Heart right ventricle (tissue), 16 donors: ENCODE measurements at regions of chr2 and their contacts with region 1.

Region 1: DNA sequence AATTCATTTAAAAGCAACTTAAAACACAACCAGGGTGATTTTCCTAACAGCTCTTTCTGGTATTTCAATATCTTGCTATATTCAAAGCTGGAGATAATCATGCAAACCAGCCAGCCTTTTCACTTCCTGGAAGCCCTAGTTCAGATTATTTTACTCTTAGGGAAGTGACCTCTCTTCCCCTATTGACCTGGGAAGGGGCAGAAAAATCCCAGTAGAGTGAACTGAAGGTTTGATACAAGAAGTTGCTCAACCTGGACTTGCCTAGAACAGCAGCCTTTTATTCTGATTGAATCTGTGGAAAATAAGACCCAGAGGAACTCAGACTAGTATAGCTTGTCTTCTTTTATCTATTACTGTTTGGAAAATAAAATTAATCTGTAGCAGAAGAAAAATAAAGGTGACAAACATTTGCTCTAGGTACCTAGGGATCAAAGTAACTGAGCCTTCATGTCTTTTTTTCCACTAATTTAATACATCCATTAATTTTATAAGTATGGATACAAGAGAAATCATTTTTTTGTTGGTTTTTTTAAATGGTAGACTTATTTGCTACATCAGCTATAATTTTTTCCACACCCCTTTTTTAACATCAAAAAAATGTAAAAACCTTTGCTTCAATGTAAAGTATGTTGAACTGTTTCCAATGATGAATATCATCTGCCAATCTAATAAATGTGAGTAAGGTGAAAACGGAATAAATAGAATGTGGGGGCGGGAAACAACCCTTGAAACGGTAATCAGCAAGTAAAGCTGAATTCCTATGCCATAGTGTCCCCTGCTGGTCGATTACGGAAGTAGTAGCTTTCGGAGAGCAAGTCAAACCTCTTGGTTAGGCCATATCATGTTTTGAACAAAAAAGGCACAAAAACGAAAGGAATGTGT is 629.9 kb downstream of the NRXN1 start:
- DNase-seq: peak in 1 of 2 donors; percentile 17
- ATAC-seq: no peak
- H3K4me3 ChIP-seq: no peak overlapping the region
- H3K27ac ChIP-seq: no peak overlapping the region
- H3K4me1 ChIP-seq: no peaks in the 10 kb centered on the region
- H3K27me3 ChIP-seq: peaks cover 0 to 8% (median 0%) of the 10 kb centered on the region in 7 donors
- CTCF ChIP-seq: peak; percentile 39 to 76 (median 67)

Region 2: GRCh38 chr2:48600204-48600813 is 1801.7 kb before region 1 on chr2:
- intact Hi-C with region 1: loop called in 1 of 10 experiments (anchors 5 kb)
- DNase-seq: no peak
- ATAC-seq: peak in 3 of 8 donors; percentile 42 to 61 (median 55)
- H3K4me3 ChIP-seq: no peak overlapping the region
- H3K27ac ChIP-seq: no peak overlapping the region
- H3K4me1 ChIP-seq: no peaks in the 10 kb centered on the region
- H3K27me3 ChIP-seq: no peaks in the 10 kb centered on the region
- CTCF ChIP-seq: peak; percentile 29 to 79 (median 73)

Region 3: DNA sequence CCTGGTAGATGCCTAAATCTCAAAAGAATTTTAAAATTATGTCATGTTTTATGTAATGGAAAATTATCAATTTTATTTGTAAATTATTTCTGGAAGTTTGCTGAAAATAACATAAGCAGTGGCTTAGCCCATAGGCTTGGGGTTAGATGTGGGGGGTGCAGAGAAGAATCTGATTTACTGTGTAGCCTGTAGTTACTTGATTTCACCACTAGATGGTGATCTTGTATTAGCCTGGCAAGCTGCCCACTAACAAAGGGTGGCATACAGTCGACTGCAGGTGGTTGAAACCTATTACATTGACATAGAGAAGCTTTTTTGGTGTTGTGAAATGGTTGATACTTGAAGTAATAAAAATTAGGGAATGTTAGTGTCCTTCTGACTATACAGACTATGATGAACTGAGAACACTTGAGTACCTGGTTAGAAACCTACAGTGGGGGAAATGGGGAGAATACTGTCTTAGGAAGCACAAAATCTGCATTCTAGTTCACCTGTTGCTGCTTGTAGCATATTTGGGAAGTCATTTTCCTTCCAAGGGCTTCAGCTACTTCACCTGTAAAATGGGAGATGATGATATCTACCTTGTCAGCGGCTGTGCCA is 1455.5 kb before region 1 on chr2:
- intact Hi-C with region 1: loop called in 6 of 10 experiments (anchors 5 to 10 kb)
- DNase-seq: peak in 1 of 2 donors; percentile 11
- ATAC-seq: peak in 7 of 8 donors; percentile 58 to 84 (median 73)
- H3K4me3 ChIP-seq: no peak overlapping the region
- H3K27ac ChIP-seq: no peak overlapping the region
- H3K4me1 ChIP-seq: peaks cover 0 to 15% (median 4%) of the 10 kb centered on the region in 9 donors
- H3K27me3 ChIP-seq: no peaks in the 10 kb centered on the region
- CTCF ChIP-seq: peak; percentile 83 to 93 (median 91)

Region 4: DNA sequence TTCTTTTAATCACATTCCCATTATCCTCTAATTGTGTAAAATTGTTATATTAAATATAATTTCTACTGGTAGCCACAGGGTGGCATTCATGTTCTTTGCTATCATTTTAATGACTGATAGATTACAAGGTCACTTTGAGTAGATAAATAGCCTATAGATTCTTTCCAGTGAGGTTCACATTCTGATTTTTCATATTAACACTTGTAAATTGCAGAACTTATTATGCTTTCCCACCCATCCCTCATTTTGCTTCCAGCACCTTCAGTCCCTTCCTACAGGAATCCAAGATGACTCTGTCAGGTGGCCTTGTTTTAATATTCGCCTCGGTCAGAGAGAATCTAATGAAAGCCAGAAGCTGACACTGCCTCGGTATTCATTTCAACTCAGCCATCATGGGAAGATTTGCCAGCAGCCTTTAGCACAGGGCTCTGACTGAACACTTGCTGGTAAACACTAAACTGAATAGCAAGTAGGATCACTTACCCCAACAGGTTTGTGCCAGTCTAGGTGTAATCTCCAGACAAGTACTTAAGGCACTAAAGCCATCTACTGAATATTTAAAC is 1146.5 kb before region 1 on chr2:
- intact Hi-C with region 1: loop called in 1 of 10 experiments (anchors 10 kb)
- DNase-seq: no peak
- ATAC-seq: no peak
- H3K4me3 ChIP-seq: no peak overlapping the region
- H3K27ac ChIP-seq: no peak overlapping the region
- H3K4me1 ChIP-seq: no peaks in the 10 kb centered on the region
- H3K27me3 ChIP-seq: no peaks in the 10 kb centered on the region
- CTCF ChIP-seq: peak in 8 of 9 donors; percentile 18 to 60 (median 34)

Region 5: DNA sequence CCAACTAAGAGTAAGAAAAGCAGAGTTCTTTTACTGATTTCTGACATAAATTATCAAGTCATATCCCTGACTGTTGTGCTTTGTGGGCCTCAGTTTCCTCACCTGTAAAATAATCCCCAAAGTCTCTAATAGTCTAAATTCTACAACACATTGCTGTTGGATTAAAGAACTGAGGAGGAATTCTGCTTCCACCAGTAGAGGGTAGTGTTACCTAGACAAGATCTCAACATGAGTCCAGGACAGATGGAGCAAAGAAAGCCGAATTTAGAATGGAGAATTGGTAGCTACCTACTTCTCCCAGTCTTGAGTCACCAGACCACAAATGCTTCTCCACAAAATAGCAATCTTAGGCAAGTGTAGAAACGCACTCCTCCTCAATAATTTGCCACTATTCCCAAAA is 785.2 kb before region 1 on chr2:
- intact Hi-C with region 1: loop called in 5 of 10 experiments (anchors 5 to 10 kb)
- DNase-seq: no peak
- ATAC-seq: peak in 1 of 8 donors; percentile 51
- H3K4me3 ChIP-seq: no peak overlapping the region
- H3K27ac ChIP-seq: no peak overlapping the region
- H3K4me1 ChIP-seq: no peaks in the 10 kb centered on the region
- H3K27me3 ChIP-seq: no peaks in the 10 kb centered on the region
- CTCF ChIP-seq: peak in 7 of 9 donors; percentile 34 to 56 (median 48)

Region 6: DNA sequence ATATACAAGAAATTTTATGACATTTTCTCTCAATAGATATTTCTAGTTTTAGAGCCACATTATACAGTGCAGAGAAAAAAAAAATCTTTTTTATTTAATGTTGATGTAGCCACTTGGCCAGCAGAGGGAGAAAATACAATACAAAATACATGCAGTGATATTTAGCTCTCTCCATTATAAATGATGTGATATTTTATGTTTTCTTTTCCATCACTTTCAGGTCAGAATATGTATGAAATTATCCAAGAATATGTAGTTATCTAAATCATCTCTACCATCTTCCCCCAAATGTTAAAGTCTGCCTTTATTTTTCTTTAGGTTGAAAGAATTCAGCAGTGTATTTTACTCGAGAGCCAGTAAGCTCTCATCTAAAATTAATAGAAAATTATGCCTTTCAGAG is 714.1 kb before region 1 on chr2:
- intact Hi-C with region 1: loop called in 2 of 10 experiments (anchors 5 kb)
- DNase-seq: no peak
- ATAC-seq: no peak
- H3K4me3 ChIP-seq: no peak overlapping the region
- H3K27ac ChIP-seq: no peak overlapping the region
- H3K4me1 ChIP-seq: no peaks in the 10 kb centered on the region
- H3K27me3 ChIP-seq: no peaks in the 10 kb centered on the region
- CTCF ChIP-seq: peak in 8 of 9 donors; percentile 21 to 56 (median 44)

Region 7: GRCh38 chr2:49770919-49771318 is 631.1 kb before region 1 on chr2:
- intact Hi-C with region 1: loop called in 1 of 10 experiments (anchors 10 kb)
- DNase-seq: peak; percentile 17 to 22
- ATAC-seq: peak; percentile 12 to 91 (median 74)
- H3K4me3 ChIP-seq: no peak overlapping the region
- H3K27ac ChIP-seq: no peak overlapping the region
- H3K4me1 ChIP-seq: no peaks in the 10 kb centered on the region
- H3K27me3 ChIP-seq: no peaks in the 10 kb centered on the region
- CTCF ChIP-seq: peak in 8 of 9 donors; percentile 4 to 55 (median 44)

Region 8: DNA sequence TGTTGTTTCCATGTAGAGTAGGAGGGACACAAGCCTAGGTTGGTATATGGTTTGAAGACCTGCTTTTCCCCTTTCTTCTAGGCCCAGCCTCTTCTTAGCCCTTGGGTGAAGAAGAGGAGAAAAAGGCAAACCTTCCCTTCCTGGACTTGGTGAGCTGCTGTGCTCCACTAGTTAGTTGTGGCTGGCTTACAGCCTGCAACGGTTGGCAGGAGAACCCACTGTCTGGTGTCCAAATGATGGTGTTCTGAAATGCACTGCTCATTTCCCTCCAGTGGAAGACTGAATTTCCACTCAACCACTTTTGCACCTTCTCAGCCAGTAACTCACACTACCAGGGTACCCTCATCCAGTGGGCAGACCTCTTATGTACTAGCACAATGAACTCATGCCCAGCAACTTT is 194.1 kb before region 1 on chr2:
- intact Hi-C with region 1: no loop called
- DNase-seq: no peak
- ATAC-seq: no peak
- H3K4me3 ChIP-seq: no peak overlapping the region
- H3K27ac ChIP-seq: no peak overlapping the region
- H3K4me1 ChIP-seq: no peaks in the 10 kb centered on the region
- H3K27me3 ChIP-seq: no peaks in the 10 kb centered on the region
- CTCF ChIP-seq: no peak

Region 9: DNA sequence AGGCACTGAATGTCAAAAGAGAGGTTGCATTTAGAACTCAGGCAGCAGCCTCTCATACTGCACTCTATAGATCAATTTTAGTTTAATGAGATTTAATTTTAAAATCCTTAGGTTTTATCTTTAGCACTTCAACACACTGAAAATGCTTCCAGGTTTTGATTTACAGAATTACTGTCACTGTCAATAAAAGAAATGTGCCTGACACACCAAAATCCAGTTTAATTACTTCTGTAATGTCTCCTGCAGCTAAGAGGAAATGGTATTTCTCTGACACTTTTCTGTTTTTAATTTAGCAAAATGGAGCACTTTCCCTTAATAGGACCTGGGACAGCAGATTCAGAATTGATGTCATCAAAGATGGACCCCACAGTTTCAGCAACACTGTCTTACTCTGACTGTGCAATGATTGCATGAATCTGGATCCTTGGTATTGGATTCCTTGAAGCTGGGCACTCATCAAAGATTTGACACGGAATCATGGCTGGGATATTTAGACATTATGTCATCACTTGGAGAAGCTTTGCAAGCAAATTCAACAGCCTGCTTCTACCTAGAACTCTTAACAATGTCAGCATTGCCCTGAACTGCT is 53.4 kb after region 1 on chr2:
- intact Hi-C with region 1: no loop called
- DNase-seq: no peak
- ATAC-seq: no peak
- H3K4me3 ChIP-seq: no peak overlapping the region
- H3K27ac ChIP-seq: no peak overlapping the region
- H3K4me1 ChIP-seq: no peaks in the 10 kb centered on the region
- H3K27me3 ChIP-seq: peaks cover 0 to 3% (median 0%) of the 10 kb centered on the region in 7 donors
- CTCF ChIP-seq: no peak

Region 10: DNA sequence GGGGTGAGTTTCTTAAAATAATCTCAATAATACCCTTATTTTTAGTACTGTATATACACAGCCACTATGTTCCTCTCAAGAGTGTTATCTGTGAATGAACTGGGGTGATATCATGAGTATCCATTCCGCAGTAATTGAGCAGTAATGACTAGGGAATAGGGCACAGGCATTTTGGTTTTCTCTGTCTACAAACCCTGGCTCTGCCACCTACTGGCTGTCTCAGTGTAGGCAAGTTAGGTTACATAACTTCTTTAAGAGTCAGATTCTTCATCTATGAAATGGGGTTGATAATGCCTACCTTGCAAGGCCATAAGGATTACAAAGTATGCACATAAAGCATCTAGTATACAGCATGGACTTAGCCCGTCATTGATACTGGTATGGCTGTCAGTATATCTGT is 74.2 kb after region 1 on chr2:
- intact Hi-C with region 1: no loop called
- DNase-seq: no peak
- ATAC-seq: no peak
- H3K4me3 ChIP-seq: no peak overlapping the region
- H3K27ac ChIP-seq: no peak overlapping the region
- H3K4me1 ChIP-seq: no peaks in the 10 kb centered on the region
- H3K27me3 ChIP-seq: no peaks in the 10 kb centered on the region
- CTCF ChIP-seq: no peak